A549 (cell line): ENCODE measurements at regions of chr9 and their contacts with region 1.

Region 1: DNA sequence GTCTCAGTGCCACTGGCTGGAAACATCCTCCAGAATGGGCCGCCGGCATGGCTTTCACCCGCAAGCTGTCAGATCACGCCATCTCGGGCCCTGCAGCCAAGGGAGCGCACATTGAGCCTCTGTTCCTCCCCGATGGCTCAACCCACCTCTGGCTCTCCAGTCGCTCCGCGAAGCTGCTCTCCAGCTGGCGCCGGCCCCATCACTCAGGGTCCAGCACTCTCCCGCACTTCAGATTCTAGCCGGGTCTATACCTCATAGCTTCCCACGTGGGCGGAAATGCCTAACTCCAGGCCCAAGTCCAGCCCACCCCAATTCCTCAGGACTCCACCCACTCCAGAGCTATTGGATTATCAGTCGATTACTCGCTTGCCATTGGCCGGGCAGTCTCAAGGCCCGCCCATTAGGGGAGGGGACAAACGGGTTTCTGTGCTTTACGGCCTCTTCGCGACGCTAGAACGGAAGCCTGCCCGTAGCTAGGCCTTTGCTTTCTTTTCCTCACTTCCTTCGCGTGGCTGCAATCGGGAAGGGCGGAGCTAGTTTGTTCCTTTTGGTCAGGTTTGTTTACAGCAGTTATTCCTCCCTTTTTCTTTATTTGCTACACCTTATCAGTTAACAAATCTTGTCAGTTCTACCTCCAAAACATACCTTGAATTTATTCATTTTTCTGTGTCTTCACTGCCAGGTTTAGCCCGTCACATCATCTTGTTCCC is at the start of gene NOL6:
- DNase-seq: peak; percentile 97 to 99
- ATAC-seq: peak; percentile 99 to 100
- H3K4me3 ChIP-seq: peak within 1 kb of the TSS; percentile 88
- H3K27ac ChIP-seq: peak within 1 kb of the TSS; percentile 75 to 88
- H3K4me1 ChIP-seq: peaks cover 14% of the 10 kb centered on the region
- CTCF ChIP-seq: no peak
- EP300 ChIP-seq: no peak
- POLR2A ChIP-seq: peak; percentile 70
- RAD21 ChIP-seq: no peak
- polyA plus RNA-seq, gene NOL6: 49.5 and 56.6 TPM in 2 replicates

Region 2: GRCh38 chr9:33264473-33265177 is 209.2 kb before region 1 on chr9 and contains the starts of genes BAG1 and CHMP5:
- CTCF ChIA-PET with region 1: no interaction called
- POLR2A ChIA-PET with region 1: no interaction called
- DNase-seq: peak; percentile 99
- ATAC-seq: peak; percentile 93 to 95
- H3K4me3 ChIP-seq: peak within 1 kb of the TSS; percentile 90
- H3K27ac ChIP-seq: peak within 1 kb of the TSS; percentile 94 to 96
- H3K4me1 ChIP-seq: peaks cover 36% of the 10 kb centered on the region
- CTCF ChIP-seq: no peak
- EP300 ChIP-seq: no peak
- POLR2A ChIP-seq: peak; percentile 77
- RAD21 ChIP-seq: peak in 1 of 2 experiments; percentile 52; a peak in 3 of 5 replicates
- polyA plus RNA-seq, gene BAG1: 51.9 and 86.9 TPM in 2 replicates
- polyA plus RNA-seq, gene CHMP5: 108 and 187 TPM in 2 replicates

Region 3: GRCh38 chr9:33446946-33447798 is 26.6 kb before region 1 on chr9 and contains the start of gene AQP3:
- CTCF ChIA-PET with region 1: interaction called, 834 read pairs
- POLR2A ChIA-PET with region 1: interaction called, 3 read pairs
- DNase-seq: peak; percentile 63 to 80
- ATAC-seq: peak; percentile 88 to 92
- H3K4me3 ChIP-seq: peak within 1 kb of the TSS; percentile 42
- H3K27ac ChIP-seq: peak within 1 kb of the TSS; percentile 43 to 80
- H3K4me1 ChIP-seq: peaks cover 36% of the 10 kb centered on the region
- CTCF ChIP-seq: peak; percentile 51
- EP300 ChIP-seq: no peak
- POLR2A ChIP-seq: peak; percentile 14; the same call in 1 of the 2 replicates
- RAD21 ChIP-seq: peak; percentile 4 to 55; a peak in 4 of 5 replicates
- polyA plus RNA-seq, gene AQP3: 18.8 and 21.7 TPM in 2 replicates

Region 4: GRCh38 chr9:33517373-33517772 is 43.6 kb after region 1 on chr9:
- CTCF ChIA-PET with region 1: interaction called, 12 read pairs
- POLR2A ChIA-PET with region 1: no interaction called
- DNase-seq: peak; percentile 40 to 65
- ATAC-seq: peak; percentile 80 to 82
- H3K4me3 ChIP-seq: no peak overlapping the region
- H3K27ac ChIP-seq: peak overlapping the region in 1 of 2 experiments; percentile 61; a peak in 2 of 6 replicates
- H3K4me1 ChIP-seq: peaks cover 36% of the 10 kb centered on the region; the same call in 2 of the 3 replicates
- CTCF ChIP-seq: peak; percentile 72
- EP300 ChIP-seq: no peak
- POLR2A ChIP-seq: no peak
- RAD21 ChIP-seq: peak; percentile 43 to 47; a peak in 3 of 5 replicates

Region 5: DNA sequence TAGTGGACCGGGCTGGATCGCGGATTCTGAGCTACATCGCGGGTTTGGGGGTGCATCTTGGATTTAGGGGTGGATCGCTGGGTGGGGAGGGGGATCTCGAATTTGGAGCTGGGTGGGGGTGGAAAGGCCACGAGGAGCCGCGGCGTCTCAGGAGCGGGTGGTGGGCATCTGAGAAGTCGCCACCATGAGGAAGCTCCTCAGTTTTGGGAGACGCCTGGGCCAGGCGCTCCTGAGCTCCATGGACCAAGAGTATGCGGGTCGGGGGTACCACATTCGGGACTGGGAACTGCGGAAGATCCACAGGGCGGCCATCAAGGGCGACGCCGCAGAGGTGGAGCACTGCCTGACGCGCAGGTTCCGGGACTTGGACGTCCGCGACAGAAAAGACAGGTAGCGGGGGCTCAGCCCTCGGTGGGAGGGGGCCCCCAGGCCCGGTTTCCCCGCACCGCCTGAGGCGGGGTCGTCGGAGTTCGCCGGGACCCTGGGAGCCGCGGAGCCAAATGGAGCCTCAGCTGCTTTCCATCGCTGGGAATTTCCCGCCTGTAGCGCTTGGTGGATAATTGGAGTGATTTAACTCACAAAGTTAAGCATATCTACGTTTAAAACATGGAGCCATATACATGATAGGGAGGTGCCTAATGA is 50.6 kb after region 1 on chr9:
- CTCF ChIA-PET with region 1: interaction called, 4 read pairs
- POLR2A ChIA-PET with region 1: interaction called, 11 read pairs
- DNase-seq: peak in 1 of 2 experiments; percentile 33
- ATAC-seq: peak; percentile 77 to 83
- H3K4me3 ChIP-seq: peak overlapping the region; percentile 68
- H3K27ac ChIP-seq: peak overlapping the region; percentile 98 to 99
- H3K4me1 ChIP-seq: peaks cover 24% of the 10 kb centered on the region; the same call in 2 of the 3 replicates
- CTCF ChIP-seq: no peak
- EP300 ChIP-seq: no peak
- POLR2A ChIP-seq: peak; percentile 50
- RAD21 ChIP-seq: no peak

Region 6: DNA sequence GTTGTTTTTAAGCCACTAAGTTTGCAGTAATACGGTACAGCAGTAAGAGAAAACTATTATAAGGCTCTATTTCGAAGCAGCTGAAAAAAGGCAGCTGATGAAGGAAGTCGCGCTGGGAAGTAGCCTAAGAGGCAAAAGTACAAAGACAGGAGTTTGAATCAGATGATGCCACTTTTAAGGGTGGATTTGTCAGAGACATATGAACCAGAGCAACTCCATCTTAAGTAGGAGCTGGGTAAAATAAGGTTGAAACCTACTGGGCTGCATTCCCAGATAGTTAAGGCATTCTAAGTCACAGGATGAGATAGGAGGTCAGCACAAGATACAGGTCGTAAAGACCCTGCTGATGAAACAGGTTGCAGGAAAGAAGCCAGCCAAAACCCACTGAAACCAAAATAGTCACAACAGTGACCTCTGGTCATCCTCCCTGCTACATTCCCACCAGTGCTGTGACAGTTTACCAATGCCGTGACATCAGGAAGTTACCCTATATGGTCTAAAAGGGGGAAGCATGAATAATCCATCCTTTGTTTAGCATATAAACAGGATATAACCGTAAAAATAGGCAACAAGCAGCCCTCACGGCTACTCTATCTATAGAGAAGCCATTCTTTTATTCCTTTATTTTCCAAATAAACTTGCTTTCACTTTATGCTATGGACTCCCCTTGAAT is 229.8 kb after region 1 on chr9:
- CTCF ChIA-PET with region 1: no interaction called
- POLR2A ChIA-PET with region 1: no interaction called
- DNase-seq: no peak
- ATAC-seq: no peak
- H3K4me3 ChIP-seq: no peak overlapping the region
- H3K27ac ChIP-seq: no peak overlapping the region
- H3K4me1 ChIP-seq: no peaks in the 10 kb centered on the region
- CTCF ChIP-seq: no peak
- EP300 ChIP-seq: no peak
- POLR2A ChIP-seq: no peak
- RAD21 ChIP-seq: no peak